Left colon (tissue), 2 donors: ENCODE measurements at regions of chr7 and their contacts with region 1.

Region 1: DNA sequence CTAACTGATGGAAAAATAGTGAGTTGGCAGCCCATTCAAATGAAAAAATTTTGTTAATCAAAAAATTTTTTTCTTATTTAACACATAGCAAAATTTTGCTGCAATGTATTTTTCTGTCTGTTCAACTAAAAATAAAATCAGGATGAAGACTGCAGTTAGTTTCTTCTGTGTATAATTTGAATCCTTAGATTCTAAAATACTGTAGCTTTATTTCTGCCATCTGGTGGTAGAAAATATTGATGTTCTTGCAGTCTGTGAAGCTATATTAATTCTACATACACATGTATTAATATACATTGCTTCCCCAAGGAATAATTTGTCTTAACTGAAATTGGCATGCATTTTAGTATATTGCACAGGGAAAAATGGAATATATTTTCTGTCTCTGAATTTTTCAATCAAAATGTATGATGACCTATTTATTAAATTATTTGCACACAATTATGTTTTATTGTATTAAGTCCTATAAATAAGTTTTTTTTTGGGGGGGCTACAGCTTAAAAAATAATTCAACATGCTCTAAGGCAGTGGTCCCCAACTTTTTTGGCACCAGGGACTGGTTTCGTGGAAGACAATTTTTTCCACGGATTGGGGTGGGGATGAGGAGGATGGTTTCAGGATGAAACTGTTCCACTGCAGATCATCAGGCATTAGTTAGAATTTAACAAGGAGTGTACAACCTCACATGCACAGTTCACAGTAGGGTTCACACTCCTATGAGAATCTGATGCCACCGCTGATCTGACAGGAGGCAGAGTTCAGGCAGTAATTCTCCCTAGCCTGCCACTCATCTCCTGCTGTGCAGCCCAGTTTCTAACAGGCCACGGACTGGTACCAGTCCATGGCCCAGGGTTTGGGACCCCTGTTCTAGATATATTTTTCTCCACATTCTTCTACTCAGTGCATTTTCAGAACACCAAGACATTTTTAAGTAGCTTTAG is 119.4 kb downstream of the GNAT3 start:
- DNase-seq: no peak
- ATAC-seq: peak; percentile 54

Region 2: GRCh38 chr7:80060218-80060806 is 332.2 kb before region 1 on chr7:
- intact Hi-C with region 1: loop called in 1 of 2 experiments (anchors 10 kb)
- DNase-seq: no peak
- ATAC-seq: no peak

Region 3: GRCh38 chr7:80095545-80095944 is 297.0 kb before region 1 on chr7:
- intact Hi-C with region 1: loop called in 1 of 2 experiments (anchors 10 kb)
- DNase-seq: no peak
- ATAC-seq: peak; percentile 62